Heart right ventricle (tissue), 16 donors: ENCODE measurements at regions of chr18 and their contacts with region 1.

Region 1: GRCh38 chr18:8254654-8255053 is 354.6 kb upstream of the RAB12 start:
- DNase-seq: peak in 1 of 2 donors; percentile 36
- ATAC-seq: peak; percentile 77 to 93 (median 83)
- H3K4me3 ChIP-seq: no peak overlapping the region
- H3K27ac ChIP-seq: peak overlapping the region in 2 of 10 donors; percentile 3 to 41
- H3K4me1 ChIP-seq: peaks cover 0 to 46% (median 19%) of the 10 kb centered on the region in 9 donors
- H3K27me3 ChIP-seq: no peaks in the 10 kb centered on the region
- CTCF ChIP-seq: no peak

Region 2: DNA sequence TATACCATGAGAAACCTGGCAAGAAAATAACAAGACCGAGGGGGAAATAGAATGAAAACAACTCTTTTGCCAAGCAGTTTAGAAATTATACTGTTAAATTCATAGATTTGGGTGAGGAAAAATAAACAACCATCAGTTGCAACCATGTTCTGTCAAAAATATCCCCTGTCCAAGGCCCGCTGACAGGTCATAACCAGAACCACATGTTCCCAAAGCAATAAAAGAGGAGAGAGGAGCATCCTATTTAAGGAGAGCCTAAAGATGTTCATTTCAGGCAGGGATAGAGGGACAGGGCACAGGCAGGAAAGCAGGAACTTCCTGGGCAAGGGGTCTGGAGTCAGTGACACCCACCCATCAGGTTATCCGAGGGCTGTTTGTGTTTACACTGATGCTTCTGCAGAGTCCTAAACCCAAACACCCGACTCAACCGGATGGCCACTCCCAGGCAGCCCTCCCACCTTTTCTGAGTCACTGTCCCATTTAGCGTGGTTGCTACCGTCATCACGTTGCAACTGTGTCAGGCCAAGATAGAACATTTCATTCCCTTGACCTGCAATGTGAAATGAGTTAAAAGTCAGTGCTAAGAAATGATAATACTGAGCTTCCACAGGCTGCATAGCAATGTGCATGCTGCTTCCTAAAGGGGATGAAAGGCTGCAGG is 113.7 kb before region 1 on chr18:
- intact Hi-C with region 1: loop called in 1 of 10 experiments (anchors 10 kb)
- DNase-seq: peak; percentile 26 to 30
- ATAC-seq: peak in 7 of 8 donors; percentile 44 to 91 (median 82)
- H3K4me3 ChIP-seq: no peak overlapping the region
- H3K27ac ChIP-seq: peak overlapping the region; percentile 17 to 86 (median 67)
- H3K4me1 ChIP-seq: peaks cover 17 to 63% (median 55%) of the 10 kb centered on the region in 9 donors
- H3K27me3 ChIP-seq: no peaks in the 10 kb centered on the region
- CTCF ChIP-seq: no peak

Region 3: DNA sequence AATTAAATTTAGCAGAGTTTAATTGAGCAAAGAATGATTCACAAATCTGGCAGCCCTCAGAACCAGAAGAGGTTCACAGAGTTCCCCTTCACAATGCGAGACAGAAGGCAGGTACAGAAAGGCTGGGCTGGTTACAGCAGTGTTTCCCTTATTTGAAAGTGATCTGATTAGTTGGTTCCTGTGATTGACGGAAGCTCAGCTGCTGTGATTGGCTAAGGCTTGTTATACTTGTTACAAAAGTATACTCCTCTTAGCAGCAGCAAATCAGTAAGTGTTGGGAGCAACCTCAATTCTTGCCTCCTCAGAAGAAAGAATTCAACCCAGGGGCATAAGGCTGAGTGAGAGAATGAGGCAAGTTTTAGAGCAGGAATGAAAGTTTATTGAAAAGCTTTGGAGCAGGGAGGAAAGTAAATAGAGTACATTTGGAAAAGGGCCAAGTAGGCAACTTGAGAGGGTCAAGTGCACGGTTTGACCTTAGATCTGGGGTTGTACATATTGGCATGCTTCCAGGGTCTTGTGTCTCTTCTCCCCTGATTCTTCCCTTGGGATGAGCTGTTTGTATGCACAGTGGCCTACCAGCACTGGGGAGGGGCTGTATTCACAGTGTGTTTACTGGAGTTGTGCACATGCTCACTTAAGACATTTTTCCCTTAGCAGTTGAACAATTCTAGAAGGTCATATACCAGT is 77.2 kb before region 1 on chr18:
- intact Hi-C with region 1: loop called in 2 of 10 experiments (anchors 10 kb)
- DNase-seq: peak in 1 of 2 donors; percentile 22
- ATAC-seq: peak; percentile 54 to 89 (median 82)
- H3K4me3 ChIP-seq: no peak overlapping the region
- H3K27ac ChIP-seq: peak overlapping the region in 5 of 10 donors; percentile 13 to 57 (median 51)
- H3K4me1 ChIP-seq: peaks cover 4 to 44% (median 31%) of the 10 kb centered on the region in 9 donors
- H3K27me3 ChIP-seq: no peaks in the 10 kb centered on the region
- CTCF ChIP-seq: no peak

Region 4: GRCh38 chr18:8319798-8320489 is 65.3 kb after region 1 on chr18:
- intact Hi-C with region 1: loop called in 2 of 10 experiments (anchors 10 kb)
- DNase-seq: no peak
- ATAC-seq: peak in 1 of 8 donors; percentile 60
- H3K4me3 ChIP-seq: no peak overlapping the region
- H3K27ac ChIP-seq: no peak overlapping the region
- H3K4me1 ChIP-seq: peaks cover 0 to 20% (median 4%) of the 10 kb centered on the region in 9 donors
- H3K27me3 ChIP-seq: no peaks in the 10 kb centered on the region
- CTCF ChIP-seq: no peak